HEK293 (cell line): ENCODE measurements at regions of chr1 and their contacts with region 1.

Region 1: GRCh38 chr1:20212685-20213331 is 26.5 kb upstream of the PLA2G2C start:
- H3K4me3 ChIP-seq: no peak overlapping the region
- H3K27ac ChIP-seq: no peak overlapping the region
- H3K4me1 ChIP-seq: no peaks in the 10 kb centered on the region
- CTCF ChIP-seq: peak; percentile 68; the same call in 1 of the 2 replicates

Region 2: GRCh38 chr1:20223551-20224419 is 11.0 kb after region 1 on chr1:
- CTCF ChIA-PET with region 1: interaction called, 11 read pairs
- POLR2A ChIA-PET with region 1: no interaction called
- H3K4me3 ChIP-seq: no peak overlapping the region
- H3K27ac ChIP-seq: no peak overlapping the region
- H3K4me1 ChIP-seq: no peaks in the 10 kb centered on the region
- CTCF ChIP-seq: no peak